ENCODE measurements at regions of chr20 and their contacts with region 1.

Region 1: GRCh38 chr20:43749734-43750294 is 23.0 kb upstream of the GTSF1L start:
- DNase-seq: peak; percentile 93
- H3K4me3 ChIP-seq: no peak overlapping the region; a peak in 1 of 4 replicates
- H3K27ac ChIP-seq: no peak overlapping the region
- H3K4me1 ChIP-seq: peaks cover 4 to 6% of the 10 kb centered on the region in 2 experiments; a peak in 2 of 4 replicates
- H3K27me3 ChIP-seq: no peaks in the 10 kb centered on the region
- CTCF ChIP-seq: peak; percentile 98
- EP300 ChIP-seq: no peak
- RAD21 ChIP-seq: peak; percentile 95

Region 2: DNA sequence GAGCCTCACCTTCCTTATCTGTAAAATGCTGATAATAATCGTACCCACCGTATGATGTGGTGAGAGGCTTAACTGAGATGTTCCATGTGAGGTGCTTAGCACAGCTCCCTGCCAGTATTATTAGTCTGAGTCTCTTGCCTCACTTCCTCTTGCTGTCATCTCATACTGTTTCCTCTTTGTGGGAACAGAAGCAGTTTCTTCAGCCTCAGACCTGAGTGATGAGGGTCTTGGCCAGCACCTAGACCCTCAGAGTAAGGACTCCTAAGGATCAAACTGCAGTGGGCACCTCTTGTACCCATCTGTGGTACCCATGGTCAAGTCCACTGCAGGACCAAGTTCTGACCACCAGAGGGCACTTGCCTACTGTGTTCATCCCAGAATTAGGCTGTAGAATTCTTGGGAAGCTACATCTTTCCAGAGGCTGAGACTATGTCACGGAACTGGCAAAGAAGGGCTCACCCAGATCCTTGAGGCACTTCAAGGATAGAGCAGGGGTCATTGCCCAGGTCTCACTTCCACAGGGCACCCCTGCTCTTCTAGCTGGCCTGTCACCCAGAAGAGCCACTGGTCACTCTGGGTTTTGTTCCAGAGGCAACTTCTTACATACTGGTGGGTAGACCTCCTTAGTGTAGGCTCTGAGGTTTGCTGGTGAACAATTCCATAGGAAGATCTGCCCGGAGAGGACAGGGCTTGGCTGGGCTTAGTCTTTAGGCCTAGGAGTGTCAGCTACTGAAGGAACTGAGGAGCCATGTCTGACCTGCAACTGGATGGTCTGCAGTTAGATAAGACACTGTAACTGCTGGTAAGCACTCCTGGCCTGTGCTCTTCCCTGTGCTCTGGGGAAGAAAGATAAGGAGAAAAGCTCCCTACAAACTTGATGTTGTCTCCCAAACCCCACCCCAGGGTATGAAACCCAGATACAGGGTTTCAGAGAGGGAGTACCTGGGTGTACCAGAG is 211.6 kb before region 1 on chr20:
- CTCF ChIA-PET with region 1: interaction called, 16 read pairs
- POLR2A ChIA-PET with region 1: no interaction called
- DNase-seq: peak; percentile 74
- H3K4me3 ChIP-seq: no peak overlapping the region; a peak in 1 of 4 replicates
- H3K27ac ChIP-seq: no peak overlapping the region; a peak in 1 of 4 replicates
- H3K4me1 ChIP-seq: peaks cover 0 to 1% of the 10 kb centered on the region in 2 experiments; a peak in 1 of 4 replicates
- H3K27me3 ChIP-seq: no peaks in the 10 kb centered on the region
- CTCF ChIP-seq: peak; percentile 93
- EP300 ChIP-seq: no peak
- RAD21 ChIP-seq: peak; percentile 90

Region 3: DNA sequence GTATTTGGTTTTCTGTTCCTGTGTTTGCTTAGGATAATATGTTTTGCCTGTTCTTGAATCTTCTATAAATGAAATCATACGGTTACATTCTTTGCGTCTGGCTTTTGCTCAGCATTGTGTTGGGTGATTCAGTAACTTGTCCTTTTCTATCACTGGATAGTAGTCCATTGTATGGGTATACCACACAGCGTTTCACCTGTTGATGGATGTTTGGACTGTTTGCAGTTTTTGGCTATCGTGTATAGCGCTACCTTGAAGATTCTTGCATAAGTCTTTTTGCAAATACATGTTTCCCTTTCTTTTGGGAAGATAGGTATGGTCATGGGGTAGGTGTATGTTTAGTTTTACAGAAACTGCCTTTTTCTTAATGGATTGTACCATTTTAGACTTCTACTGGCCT is 73.4 kb before region 1 on chr20:
- CTCF ChIA-PET with region 1: no interaction called
- POLR2A ChIA-PET with region 1: no interaction called
- DNase-seq: no peak
- H3K4me3 ChIP-seq: no peak overlapping the region
- H3K27ac ChIP-seq: no peak overlapping the region
- H3K4me1 ChIP-seq: no peaks in the 10 kb centered on the region
- H3K27me3 ChIP-seq: no peaks in the 10 kb centered on the region
- CTCF ChIP-seq: no peak
- EP300 ChIP-seq: no peak
- RAD21 ChIP-seq: no peak

Region 4: DNA sequence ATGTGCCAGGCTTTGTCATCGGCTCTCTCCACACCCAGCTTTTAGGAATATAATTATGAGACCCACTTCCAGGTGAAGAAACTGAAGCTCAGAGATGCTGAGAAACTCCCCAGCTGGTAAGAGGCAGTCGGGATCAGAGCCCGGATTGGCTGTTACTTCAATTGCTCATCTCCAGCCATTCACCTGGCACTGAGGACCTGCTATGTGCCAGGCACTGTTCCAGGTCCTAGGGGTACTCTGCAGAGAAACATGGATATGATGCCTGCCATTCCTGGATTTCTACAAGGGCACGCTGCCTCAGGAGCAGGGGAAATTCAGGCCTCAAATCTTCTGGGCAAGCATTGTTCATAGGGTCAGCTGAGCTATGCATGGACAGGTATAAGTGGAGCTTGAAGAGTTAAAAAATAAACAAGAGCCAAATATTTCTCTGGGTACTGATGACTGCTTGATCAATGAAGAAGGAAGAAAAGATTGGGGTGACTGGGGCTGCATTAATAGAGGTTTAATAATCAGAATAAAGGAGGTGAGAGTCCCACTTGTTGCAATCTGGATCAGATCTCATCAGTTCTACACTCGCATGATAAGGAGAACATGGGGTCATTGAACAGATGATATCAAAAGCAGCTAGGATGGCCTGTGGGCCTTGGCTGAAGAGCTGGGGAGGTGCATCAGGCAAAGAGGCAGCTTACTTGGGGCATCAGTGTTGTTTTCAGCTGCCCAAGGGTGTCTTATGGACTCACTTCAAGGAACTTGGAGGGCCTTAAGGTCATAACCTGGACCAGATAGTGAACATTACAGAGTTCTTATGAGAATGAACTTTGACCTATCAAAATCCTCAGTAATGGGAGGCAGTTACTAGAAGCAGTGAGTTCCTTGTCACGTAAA is 83.9 kb after region 1 on chr20:
- CTCF ChIA-PET with region 1: interaction called, 29 read pairs
- POLR2A ChIA-PET with region 1: no interaction called
- DNase-seq: no peak
- H3K4me3 ChIP-seq: no peak overlapping the region
- H3K27ac ChIP-seq: no peak overlapping the region
- H3K4me1 ChIP-seq: peaks cover 0 to 4% of the 10 kb centered on the region in 2 experiments; a peak in 1 of 4 replicates
- H3K27me3 ChIP-seq: no peaks in the 10 kb centered on the region; the same call in 1 of the 2 replicates
- CTCF ChIP-seq: no peak
- EP300 ChIP-seq: no peak
- RAD21 ChIP-seq: no peak

Region 5: DNA sequence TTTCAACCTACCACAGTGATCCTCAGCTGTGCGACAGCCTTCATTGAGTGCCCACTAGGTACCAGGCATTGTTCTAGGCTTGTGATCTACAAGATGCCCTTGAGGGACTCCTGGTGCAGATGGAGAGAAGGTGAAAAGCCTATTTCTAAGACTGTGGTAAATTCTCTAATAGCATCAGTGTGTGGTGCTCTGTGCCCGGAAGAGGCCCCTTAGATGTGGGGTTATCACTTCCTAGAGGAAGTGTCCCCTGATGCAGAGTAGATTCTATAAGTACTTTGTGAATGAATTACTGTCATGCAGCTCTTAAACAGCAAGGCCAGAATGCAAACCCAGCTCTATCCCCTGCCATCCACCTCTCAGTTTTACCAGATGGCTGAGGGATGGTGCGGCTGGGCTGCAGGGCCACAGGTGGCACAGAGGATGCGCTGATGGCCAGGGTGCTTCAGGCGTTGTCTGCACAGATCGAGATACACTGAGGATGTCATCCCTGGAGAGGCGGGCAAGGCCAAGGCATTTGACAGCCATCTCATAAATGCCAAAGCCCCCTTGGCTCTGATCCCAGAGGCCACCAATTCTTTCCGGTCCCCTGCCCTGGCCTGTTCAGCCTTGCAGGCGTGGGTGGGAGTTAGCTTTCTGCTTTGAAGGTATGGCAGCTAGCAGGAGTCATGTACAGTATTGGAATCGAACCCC is 261.6 kb after region 1 on chr20:
- CTCF ChIA-PET with region 1: interaction called, 10 read pairs
- POLR2A ChIA-PET with region 1: no interaction called
- DNase-seq: peak; percentile 76
- H3K4me3 ChIP-seq: no peak overlapping the region
- H3K27ac ChIP-seq: peak overlapping the region in 1 of 2 experiments; percentile 98; a peak in 2 of 4 replicates
- H3K4me1 ChIP-seq: peaks cover 17 to 61% of the 10 kb centered on the region in 2 experiments; a peak in 3 of 4 replicates
- H3K27me3 ChIP-seq: no peaks in the 10 kb centered on the region
- CTCF ChIP-seq: no peak
- EP300 ChIP-seq: peak in 1 of 2 experiments; percentile 88; a peak in 2 of 4 replicates
- RAD21 ChIP-seq: peak; percentile 50

Region 6: GRCh38 chr20:44074252-44075151 is 324.7 kb after region 1 on chr20:
- CTCF ChIA-PET with region 1: interaction called, 134 read pairs
- POLR2A ChIA-PET with region 1: no interaction called
- DNase-seq: peak; percentile 86
- H3K4me3 ChIP-seq: no peak overlapping the region
- H3K27ac ChIP-seq: peak overlapping the region; percentile 35 to 97; a peak in 3 of 4 replicates
- H3K4me1 ChIP-seq: peaks cover 9 to 31% of the 10 kb centered on the region in 2 experiments; a peak in 2 of 4 replicates
- H3K27me3 ChIP-seq: no peaks in the 10 kb centered on the region
- CTCF ChIP-seq: 0 out of 2 replicates have a peak, but pooled peaks have one; percentile 6
- EP300 ChIP-seq: peak in 1 of 2 experiments; percentile 100; a peak in 2 of 4 replicates
- RAD21 ChIP-seq: peak; percentile 74

Region 7: GRCh38 chr20:44092551-44093248 is 342.9 kb after region 1 on chr20:
- CTCF ChIA-PET with region 1: interaction called, 12 read pairs
- POLR2A ChIA-PET with region 1: no interaction called
- DNase-seq: peak; percentile 51
- H3K4me3 ChIP-seq: no peak overlapping the region; a peak in 1 of 4 replicates
- H3K27ac ChIP-seq: no peak overlapping the region
- H3K4me1 ChIP-seq: peaks cover 0 to 16% of the 10 kb centered on the region in 2 experiments; a peak in 1 of 4 replicates
- H3K27me3 ChIP-seq: no peaks in the 10 kb centered on the region
- CTCF ChIP-seq: peak; percentile 74
- EP300 ChIP-seq: no peak
- RAD21 ChIP-seq: peak; percentile 80

Region 8: GRCh38 chr20:44516491-44516890 is 766.7 kb after region 1 on chr20:
- CTCF ChIA-PET with region 1: no interaction called
- POLR2A ChIA-PET with region 1: no interaction called
- DNase-seq: no peak
- H3K4me3 ChIP-seq: no peak overlapping the region
- H3K27ac ChIP-seq: no peak overlapping the region
- H3K4me1 ChIP-seq: peaks cover 0 to 11% of the 10 kb centered on the region in 2 experiments; a peak in 2 of 4 replicates
- H3K27me3 ChIP-seq: no peaks in the 10 kb centered on the region
- CTCF ChIP-seq: no peak
- EP300 ChIP-seq: no peak
- RAD21 ChIP-seq: no peak

Measured in SK-N-SH (cell line).